Mammary epithelial cell (primary cell): ENCODE measurements at regions of chr13 and their contacts with region 1.

Region 1: DNA sequence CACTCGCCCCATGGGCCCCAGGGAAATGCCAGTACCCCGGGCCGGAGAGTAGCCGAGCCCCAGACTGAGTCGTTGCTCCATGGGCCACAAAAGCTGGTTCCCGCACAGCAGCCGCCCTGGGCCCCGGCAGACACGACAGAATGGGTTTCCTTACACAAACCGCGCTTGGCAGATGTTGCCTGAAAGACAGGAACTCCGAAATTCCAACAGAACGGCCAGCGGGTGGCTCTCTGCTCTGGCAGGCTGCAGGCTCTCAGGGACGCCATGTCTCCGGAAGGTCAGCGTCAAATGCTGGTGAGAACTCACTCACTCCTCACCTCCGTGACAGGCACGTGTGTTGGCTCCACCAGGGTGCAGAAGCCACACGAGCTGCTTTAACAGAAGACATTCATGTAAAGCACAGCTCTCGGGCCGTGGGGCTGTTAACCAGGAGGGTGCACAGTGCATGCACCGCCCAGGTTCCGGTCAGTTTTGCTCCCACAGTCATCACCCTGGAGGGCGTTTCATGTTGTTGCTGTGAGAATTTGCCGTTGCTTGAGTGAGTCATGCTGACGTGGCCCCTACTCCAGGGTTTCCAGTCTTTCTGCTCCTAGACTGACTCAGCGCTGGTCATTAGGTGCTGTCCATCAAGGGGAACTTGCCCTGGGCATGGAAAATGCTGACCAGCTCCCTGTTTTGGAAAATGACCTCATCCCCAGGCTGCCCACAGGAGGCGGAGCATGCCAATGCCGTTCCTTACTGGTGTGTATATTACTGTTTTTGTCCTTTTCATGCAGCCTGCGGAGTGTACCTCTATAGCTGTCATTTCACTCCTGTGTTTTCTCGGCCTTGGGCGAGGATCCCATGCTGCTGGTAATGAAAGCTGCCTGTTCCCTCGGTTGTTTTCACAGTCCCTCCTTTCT is 44.8 kb downstream of the ANKRD10 start:
- DNase-seq: peak; percentile 100
- H3K4me3 ChIP-seq: peak overlapping the region; percentile 13 to 32 (median 20)
- H3K27ac ChIP-seq: peak overlapping the region; percentile 72
- H3K4me1 ChIP-seq: peaks cover 15% of the 10 kb centered on the region
- H3K27me3 ChIP-seq: no peaks in the 10 kb centered on the region
- CTCF ChIP-seq: no peak

Region 2: GRCh38 chr13:110841846-110842245 is 28.2 kb before region 1 on chr13:
- CTCF ChIA-PET with region 1: no interaction called
- dilution Hi-C with region 1: no loop called
- in situ Hi-C with region 1: no loop called
- intact Hi-C with region 1: no loop called
- DNase-seq: peak; percentile 77
- H3K4me3 ChIP-seq: no peak overlapping the region
- H3K27ac ChIP-seq: no peak overlapping the region
- H3K4me1 ChIP-seq: peaks cover 14% of the 10 kb centered on the region
- H3K27me3 ChIP-seq: peaks cover 9% of the 10 kb centered on the region
- CTCF ChIP-seq: no peak

Region 3: GRCh38 chr13:110907951-110908898 is 38.2 kb after region 1 on chr13:
- CTCF ChIA-PET with region 1: no interaction called
- dilution Hi-C with region 1: no loop called
- in situ Hi-C with region 1: no loop called
- intact Hi-C with region 1: loop called (anchors 1 kb)
- DNase-seq: peak; percentile 99
- H3K4me3 ChIP-seq: peak overlapping the region in 1 of 3 experiments; percentile 12
- H3K27ac ChIP-seq: peak overlapping the region; percentile 100
- H3K4me1 ChIP-seq: peaks cover 67% of the 10 kb centered on the region
- H3K27me3 ChIP-seq: no peaks in the 10 kb centered on the region
- CTCF ChIP-seq: peak in 1 of 2 donors; percentile 36

Region 4: DNA sequence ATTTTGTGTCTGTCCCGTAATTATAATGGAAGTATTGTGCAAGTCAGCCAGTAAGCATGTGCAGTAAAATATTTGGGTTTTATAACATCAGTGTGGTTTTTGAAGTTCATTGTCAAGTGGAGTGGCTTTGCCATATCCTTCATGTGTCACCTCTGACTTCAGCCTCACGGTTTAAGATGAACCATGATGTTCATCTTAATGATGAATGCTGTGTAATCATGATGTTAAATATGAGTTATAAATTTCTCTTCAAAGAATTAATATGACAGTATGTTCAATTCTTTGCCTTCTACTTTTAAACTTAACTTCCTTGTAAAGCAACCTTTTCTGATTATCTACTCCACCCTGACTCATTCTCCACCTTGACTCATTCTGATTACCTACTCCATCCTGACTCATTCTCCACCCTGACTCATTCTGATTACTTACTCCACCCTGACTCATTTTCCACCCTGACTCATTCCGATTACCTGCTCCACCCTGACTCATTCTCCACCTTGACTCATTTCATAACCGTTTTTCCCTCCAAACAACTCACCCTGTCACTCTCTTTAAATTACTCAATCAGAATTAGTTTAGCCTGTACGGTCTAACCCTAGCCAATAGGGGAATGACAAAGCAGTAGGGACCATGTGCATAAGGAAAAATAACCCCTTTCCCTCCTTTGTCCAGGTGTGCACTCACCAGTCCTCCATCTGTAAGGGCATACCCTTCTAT is 95.1 kb after region 1 on chr13:
- CTCF ChIA-PET with region 1: no interaction called
- dilution Hi-C with region 1: no loop called
- in situ Hi-C with region 1: no loop called
- intact Hi-C with region 1: loop called (anchors 1 kb)
- DNase-seq: peak; percentile 96
- H3K4me3 ChIP-seq: no peak overlapping the region
- H3K27ac ChIP-seq: peak overlapping the region; percentile 59
- H3K4me1 ChIP-seq: peaks cover 20% of the 10 kb centered on the region
- H3K27me3 ChIP-seq: no peaks in the 10 kb centered on the region
- CTCF ChIP-seq: no peak

Region 5: DNA sequence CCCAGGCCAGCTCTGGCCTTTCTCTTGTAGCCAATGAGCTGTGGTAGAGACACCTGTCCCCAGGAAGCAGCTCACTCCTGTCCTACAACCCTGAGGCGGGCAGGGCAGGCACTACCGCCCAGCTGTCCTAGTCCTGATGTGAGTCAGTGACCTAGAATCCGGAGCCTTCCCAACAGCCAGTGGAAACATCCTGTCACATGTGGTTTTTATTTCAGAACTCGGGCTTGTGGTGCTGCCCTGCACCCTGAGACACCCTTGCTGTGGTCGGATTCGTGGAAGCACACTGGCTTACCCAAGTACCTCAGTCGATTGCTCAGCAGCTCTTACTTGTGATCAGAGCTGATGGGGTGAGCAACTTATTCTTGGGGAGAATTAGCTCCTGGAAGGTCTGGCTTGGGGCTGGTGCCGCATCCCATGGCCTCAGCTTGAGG is 161.5 kb after region 1 on chr13:
- CTCF ChIA-PET with region 1: no interaction called
- dilution Hi-C with region 1: loop called (anchors 5 kb)
- in situ Hi-C with region 1: no loop called
- intact Hi-C with region 1: no loop called
- DNase-seq: peak; percentile 78
- H3K4me3 ChIP-seq: no peak overlapping the region
- H3K27ac ChIP-seq: no peak overlapping the region
- H3K4me1 ChIP-seq: peaks cover 31% of the 10 kb centered on the region
- H3K27me3 ChIP-seq: no peaks in the 10 kb centered on the region
- CTCF ChIP-seq: no peak